ENCODE measurements at regions of chr10 and their contacts with region 1.

Region 1: DNA sequence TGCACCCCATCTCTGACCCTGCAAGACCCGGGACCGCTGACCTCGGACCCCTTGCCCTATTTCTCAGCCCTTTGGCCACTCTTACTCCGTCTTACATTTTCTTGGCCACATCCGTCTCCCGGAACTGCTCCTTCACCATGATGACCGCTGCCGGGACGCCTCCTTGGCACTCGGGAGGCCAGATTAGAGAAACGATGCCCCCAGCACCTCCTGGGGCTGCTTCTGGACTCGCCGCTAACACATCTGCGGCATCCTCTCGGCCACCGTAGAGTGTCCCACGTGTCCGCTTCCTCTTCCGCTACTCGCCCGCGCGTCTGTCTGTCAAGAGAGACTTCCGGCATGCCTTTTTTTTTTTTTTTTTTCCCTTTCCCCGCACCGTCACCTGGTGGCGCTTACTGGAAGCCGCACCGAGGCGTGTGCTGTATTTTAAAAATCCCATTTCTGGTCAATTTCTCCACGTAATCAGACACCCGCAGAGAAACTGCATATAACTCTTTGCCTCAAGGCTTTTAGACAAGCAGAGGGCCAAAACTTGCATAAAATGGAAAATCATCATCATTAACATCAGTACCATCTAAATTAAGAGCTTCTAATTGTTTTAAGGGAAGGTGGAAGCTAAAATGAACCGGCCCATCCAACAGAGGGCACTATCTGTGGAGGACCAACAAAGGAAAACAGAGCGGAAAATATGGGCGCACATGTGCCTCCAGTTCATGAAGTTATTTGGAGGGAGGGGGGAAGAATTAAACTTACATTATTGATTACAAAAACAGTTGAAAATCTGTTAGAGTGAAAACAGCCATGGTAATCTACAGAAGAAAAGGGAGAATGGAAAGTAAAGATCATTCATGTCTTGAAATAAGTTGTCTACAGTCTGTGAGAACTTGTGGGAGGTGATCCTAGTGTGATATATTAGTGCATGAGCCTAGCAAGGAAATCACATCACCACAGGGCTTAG is at the start of gene POLR3A:
- DNase-seq: peak; percentile 94
- H3K4me3 Mint-ChIP-seq: peak within 1 kb of the TSS; percentile 98
- H3K27ac Mint-ChIP-seq: peak within 1 kb of the TSS; percentile 93
- H3K4me1 Mint-ChIP-seq: peaks cover 38% of the 10 kb centered on the region
- H3K27me3 Mint-ChIP-seq: no peaks in the 10 kb centered on the region
- total RNA-seq, gene POLR3A: 14.1 to 14.2 TPM

Region 2: DNA sequence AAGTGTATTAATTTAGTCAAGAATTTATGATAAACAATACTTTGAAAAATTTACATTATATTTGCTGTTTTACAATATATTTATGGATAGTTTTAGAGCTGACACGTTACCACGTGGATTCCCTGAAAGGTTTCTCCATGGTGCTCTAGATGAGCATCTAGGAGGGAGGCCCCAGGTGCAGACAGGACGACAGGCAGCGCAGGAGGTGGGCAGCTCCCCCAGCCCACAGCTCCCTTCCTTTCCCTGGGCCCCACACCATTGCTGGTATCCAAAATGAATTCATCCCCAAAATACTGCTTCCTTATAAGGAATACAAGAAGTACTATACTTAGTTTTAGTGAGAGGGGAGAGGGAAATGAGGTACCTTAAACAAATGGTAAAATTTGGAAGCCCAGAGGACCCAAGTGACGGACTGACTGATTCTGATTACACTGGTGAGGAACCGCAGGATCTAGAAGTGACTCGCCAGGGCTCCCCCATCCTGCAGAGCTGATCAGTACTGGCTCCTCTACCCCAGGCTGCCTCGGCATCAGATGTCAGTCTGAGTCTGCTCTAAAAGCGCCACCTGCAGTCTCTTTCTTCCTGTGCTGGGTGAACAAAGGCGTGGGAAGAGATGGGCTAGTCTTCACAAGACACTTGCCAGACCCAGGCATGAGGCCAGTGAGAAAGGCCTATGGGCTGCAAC is 192.2 kb before region 1 on chr10:
- CTCF ChIA-PET with region 1: no interaction called
- intact Hi-C with region 1: loop called (anchors 2 kb)
- DNase-seq: peak; percentile 86
- H3K4me3 Mint-ChIP-seq: no peak overlapping the region
- H3K27ac Mint-ChIP-seq: no peak overlapping the region
- H3K4me1 Mint-ChIP-seq: peaks cover 4% of the 10 kb centered on the region
- H3K27me3 Mint-ChIP-seq: no peaks in the 10 kb centered on the region

Region 3: DNA sequence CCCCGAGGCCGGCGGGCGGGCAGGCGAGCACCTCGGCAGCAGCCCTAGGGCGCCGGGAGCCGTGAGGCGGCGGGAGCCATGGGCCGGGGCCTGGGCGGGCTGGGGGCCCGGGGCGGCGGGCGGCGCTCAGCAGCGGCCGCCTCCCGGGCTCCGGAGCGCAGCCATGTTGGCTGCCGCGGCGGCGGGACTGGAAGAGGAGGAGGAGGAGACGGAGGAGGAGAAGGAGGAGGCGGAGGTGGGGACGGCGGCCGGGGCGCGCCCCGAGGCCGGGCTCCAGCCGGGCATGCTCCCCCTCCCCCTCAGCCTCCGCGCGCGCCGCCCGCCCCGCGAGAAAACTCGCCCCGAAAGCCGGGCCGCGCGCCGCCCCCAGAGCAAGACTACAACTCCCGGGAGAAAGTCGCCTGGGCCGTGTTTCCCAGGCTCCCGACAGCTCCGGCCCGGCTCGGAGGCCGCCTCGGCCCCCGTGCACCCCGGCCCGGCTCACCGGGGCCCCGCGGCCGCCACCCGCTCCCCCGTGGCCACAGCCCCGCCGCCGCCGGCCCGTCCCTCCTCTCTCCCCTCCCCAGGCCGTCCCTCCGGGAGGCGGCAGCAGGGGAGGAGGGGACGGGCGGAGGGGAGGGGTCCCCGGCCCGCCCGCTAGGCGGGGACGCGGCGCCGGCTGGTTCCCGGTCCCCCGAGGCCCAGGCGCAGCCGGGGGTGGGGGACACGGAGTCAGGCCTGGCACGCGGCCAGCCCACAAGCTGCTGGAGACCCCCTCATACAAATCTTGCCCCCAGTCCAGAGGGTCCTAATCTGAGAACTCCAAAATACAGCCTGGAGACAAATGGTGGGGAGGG is 102.8 kb before region 1 on chr10 and contains the start of gene DLG5:
- CTCF ChIA-PET with region 1: no interaction called
- intact Hi-C with region 1: loop called (anchors 2 kb)
- DNase-seq: peak; percentile 43
- H3K4me3 Mint-ChIP-seq: peak within 1 kb of the TSS; percentile 52
- H3K27ac Mint-ChIP-seq: no peak within 1 kb of the TSS
- H3K4me1 Mint-ChIP-seq: peaks cover 8% of the 10 kb centered on the region
- H3K27me3 Mint-ChIP-seq: peaks cover 36% of the 10 kb centered on the region
- total RNA-seq, gene DLG5: 2.6 to 3.3 TPM

Region 4: GRCh38 chr10:78255796-78256638 is 226.5 kb after region 1 on chr10:
- CTCF ChIA-PET with region 1: no interaction called
- intact Hi-C with region 1: no loop called
- DNase-seq: no peak
- H3K4me3 Mint-ChIP-seq: no peak overlapping the region
- H3K27ac Mint-ChIP-seq: no peak overlapping the region
- H3K4me1 Mint-ChIP-seq: no peaks in the 10 kb centered on the region
- H3K27me3 Mint-ChIP-seq: no peaks in the 10 kb centered on the region

Region 5: GRCh38 chr10:78579995-78580394 is 550.4 kb after region 1 on chr10:
- CTCF ChIA-PET with region 1: no interaction called
- intact Hi-C with region 1: loop called (anchors 5 kb)
- DNase-seq: no peak
- H3K4me3 Mint-ChIP-seq: no peak overlapping the region
- H3K27ac Mint-ChIP-seq: no peak overlapping the region
- H3K4me1 Mint-ChIP-seq: peaks cover 15% of the 10 kb centered on the region
- H3K27me3 Mint-ChIP-seq: no peaks in the 10 kb centered on the region

Region 6: DNA sequence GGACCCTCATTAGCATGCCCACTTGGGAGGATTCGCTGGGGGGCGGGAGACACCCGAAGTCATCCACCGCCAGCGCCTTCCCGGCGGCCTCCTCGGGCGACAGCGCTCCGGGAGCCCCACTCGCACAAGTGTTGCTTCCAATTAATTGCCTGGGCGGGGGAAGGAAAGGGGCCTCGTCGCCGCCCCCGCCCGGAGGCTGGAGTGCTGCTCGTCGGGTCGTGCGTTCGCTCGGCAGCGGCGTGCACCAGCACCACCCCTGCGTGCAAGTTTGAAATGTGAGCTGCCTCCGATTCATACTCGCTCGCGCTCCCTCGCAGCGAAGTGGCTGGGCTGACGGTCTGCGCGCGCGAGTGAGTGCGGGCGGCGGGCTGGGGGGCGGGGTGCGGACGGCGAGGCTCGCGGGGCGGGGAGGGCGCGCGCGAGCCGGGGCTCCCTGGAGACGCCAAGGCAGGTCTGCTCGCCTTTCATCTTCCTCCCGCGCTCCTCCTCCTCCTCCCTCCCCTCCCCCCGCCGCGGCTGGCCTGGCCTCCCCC is 1213.1 kb after region 1 on chr10:
- CTCF ChIA-PET with region 1: no interaction called
- intact Hi-C with region 1: loop called (anchors 2 kb)
- DNase-seq: peak; percentile 69
- H3K4me3 Mint-ChIP-seq: peak overlapping the region; percentile 78
- H3K27ac Mint-ChIP-seq: peak overlapping the region; percentile 56
- H3K4me1 Mint-ChIP-seq: peaks cover 45% of the 10 kb centered on the region
- H3K27me3 Mint-ChIP-seq: no peaks in the 10 kb centered on the region

Region 7: DNA sequence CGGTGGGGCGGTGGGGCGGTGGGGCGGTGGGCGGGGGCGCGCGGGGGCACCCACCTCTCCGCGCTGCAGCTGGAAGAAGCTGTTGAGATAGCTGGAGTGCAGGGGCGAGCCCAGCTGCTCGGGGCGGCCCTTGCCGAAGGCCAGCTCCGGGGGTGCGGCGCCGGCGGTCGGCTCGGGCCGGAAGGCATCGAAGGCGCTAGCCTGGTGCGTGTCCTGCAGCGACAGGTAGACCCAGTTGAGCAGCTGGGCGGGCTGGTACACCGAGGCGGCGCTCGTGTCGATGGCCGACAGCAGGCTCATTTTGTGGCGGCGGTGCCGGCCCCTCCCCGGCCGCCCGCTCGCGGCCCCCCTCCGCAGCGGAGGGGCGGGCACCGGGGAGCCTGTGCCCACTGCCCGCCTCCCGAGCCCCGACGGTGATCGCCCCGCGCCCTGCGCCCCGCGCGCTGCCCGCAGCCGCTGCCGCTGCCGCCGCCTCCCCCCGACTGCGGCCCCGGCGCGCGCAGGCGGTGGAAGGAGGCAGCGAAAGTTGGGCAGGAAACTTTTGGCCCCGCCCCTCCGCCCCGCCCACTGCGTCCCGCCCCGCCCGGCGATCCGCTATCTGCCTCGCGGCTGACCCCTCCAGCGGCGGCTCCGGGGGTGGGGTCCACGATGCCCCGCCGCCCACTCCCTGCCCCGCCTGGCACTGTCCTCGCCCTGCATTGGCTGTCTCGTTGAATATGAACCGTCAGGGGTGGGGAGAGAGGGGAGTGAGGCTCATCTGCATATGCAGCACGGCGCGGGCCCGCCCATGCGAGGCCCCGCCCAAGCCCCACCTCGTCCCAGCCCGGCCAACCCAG is 1415.8 kb after region 1 on chr10 and contains the start of gene ZCCHC24:
- CTCF ChIA-PET with region 1: no interaction called
- intact Hi-C with region 1: loop called (anchors 10 kb)
- DNase-seq: peak; percentile 92
- H3K4me3 Mint-ChIP-seq: peak within 1 kb of the TSS; percentile 70
- H3K27ac Mint-ChIP-seq: no peak within 1 kb of the TSS
- H3K4me1 Mint-ChIP-seq: peaks cover 21% of the 10 kb centered on the region
- H3K27me3 Mint-ChIP-seq: peaks cover 12% of the 10 kb centered on the region
- total RNA-seq, gene ZCCHC24: 0.52 to 0.69 TPM